ENCODE measurements at regions of chr15 and their contacts with region 1.

Region 1: GRCh38 chr15:34056936-34057335 is 17.9 kb upstream of the AVEN start:
- DNase-seq: no peak
- H3K4me3 ChIP-seq: no peak overlapping the region
- H3K27ac ChIP-seq: no peak overlapping the region
- H3K4me1 ChIP-seq: no peaks in the 10 kb centered on the region
- H3K27me3 ChIP-seq: no peaks in the 10 kb centered on the region
- CTCF ChIP-seq: no peak

Region 2: DNA sequence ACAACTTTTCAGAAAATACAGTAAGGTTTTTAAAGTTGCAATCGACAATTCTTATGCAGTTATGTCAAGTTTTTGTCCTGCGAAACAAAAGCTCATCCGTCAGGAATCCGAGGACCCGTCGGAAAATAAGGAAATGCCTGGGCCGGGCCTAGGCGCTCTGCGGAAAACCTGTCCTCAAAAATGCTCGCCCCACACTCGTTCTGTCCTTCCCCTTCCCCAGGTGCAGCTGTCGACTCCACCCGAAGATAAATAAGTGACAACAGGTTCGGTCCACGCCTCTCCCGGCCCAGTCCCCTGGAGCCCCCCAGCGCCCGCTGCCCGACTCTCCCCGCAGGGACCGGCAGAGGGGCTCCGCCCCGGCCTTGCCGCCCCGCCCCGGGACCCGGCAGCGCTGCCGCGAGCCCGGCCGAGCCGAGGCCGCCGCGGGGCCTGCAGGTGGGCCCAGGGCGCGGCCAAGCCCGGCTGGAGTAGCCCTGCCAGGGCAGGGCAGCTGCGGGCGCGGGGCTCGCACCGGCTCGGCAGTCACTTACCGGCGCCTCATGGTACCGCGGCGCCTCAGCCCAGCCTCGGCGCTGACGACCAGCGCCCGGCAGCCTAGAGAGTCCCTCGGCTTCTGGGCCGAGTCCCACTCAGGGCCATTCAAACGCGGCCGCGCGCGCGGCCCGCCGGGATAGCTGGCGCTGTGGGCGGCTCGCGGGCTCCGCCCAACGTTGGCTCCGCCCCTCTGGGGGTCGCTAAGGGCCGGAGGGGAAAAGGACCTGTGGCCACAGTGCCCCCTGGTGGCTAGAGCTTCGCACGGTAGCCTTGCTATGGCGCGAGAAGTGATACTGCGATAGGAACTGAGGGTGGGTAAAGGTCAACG is 152.7 kb after region 1 on chr15 and contains the start of gene KATNBL1:
- intact Hi-C with region 1: loop called (anchors 2 kb)
- DNase-seq: peak; percentile 99
- H3K4me3 ChIP-seq: peak within 1 kb of the TSS; percentile 45
- H3K27ac ChIP-seq: peak within 1 kb of the TSS; percentile 88
- H3K4me1 ChIP-seq: no peaks in the 10 kb centered on the region
- H3K27me3 ChIP-seq: no peaks in the 10 kb centered on the region
- CTCF ChIP-seq: peak; percentile 93
- total RNA-seq, gene KATNBL1: 37.2 to 43.0 TPM